Naive thymus-derived CD4-positive, alpha-beta T cell (primary cell): ENCODE measurements at regions of chr19 and their contacts with region 1.

Region 1: GRCh38 chr19:8513687-8514504 is at the start of gene ZNF414:
- DNase-seq: peak; percentile 93 to 100 (median 98)
- ATAC-seq: peak; percentile 88
- H3K4me3 ChIP-seq: peak within 1 kb of the TSS; percentile 73
- H3K4me3 Mint-ChIP-seq: peak within 1 kb of the TSS; percentile 89 to 97 (median 92)
- H3K27ac ChIP-seq: peak within 1 kb of the TSS; percentile 98
- H3K27ac Mint-ChIP-seq: peak within 1 kb of the TSS; percentile 91 to 100 (median 99)
- H3K4me1 ChIP-seq: peaks cover 52 to 63% of the 10 kb centered on the region in 2 donors
- H3K4me1 Mint-ChIP-seq: peaks cover 32 to 64% (median 47%) of the 10 kb centered on the region in 7 donors
- H3K27me3 ChIP-seq: no peaks in the 10 kb centered on the region
- H3K27me3 Mint-ChIP-seq: no peaks in the 10 kb centered on the region
- total RNA-seq, gene ZNF414: 36.0 to 69.2 (median 60.8) TPM

Region 2: DNA sequence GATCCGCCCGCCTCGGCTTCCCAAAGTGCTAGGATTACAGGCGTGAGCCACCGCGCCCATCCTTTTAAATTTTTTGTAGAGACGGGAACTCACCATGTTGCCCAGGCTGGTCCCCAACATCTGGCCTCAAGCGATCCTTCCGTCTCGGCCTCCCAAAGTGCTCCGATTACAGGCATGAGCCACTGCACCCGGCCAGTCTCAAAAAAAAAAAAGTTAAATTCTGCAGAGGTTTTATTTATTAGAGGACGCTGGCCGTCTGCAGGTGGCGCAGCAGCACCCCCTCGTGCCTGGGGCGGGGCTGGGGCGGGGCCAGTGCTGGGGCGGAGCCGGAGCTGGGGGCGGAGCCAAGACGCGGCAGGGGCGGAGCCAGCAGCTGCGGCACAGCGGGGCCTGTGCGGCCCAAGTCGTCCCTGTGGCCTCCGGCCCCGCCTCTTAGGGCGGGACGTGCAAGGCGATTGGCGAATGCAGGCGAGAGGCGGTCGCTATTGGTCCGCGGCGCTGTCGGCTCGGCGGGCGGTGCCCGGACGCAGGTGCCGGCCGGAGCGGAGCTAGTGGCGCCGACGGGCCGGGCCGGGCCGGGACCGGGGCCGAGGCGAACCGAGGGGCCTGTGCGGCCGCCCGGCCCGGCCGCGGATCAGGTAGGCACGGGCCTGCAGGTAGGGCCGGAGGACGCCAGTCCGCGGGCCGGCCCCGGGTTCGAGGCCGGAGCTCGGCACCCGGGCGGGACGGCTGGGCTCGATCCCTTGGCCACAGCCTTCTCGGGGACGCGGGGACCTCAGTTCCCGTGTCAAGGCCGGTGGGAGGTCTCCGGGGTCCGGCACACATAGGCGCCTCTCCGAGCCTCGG is 100.9 kb before region 1 on chr19 and contains the start of gene MARCHF2:
- CTCF ChIA-PET with region 1: interaction called, 4 read pairs
- POLR2A ChIA-PET with region 1: interaction called, 4 read pairs
- intact Hi-C with region 1: loop called in 1 of 2 experiments (anchors 1 kb)
- DNase-seq: peak; percentile 91 to 96 (median 93)
- ATAC-seq: peak; percentile 100
- H3K4me3 ChIP-seq: peak within 1 kb of the TSS; percentile 72
- H3K4me3 Mint-ChIP-seq: peak within 1 kb of the TSS; percentile 58 to 85 (median 71)
- H3K27ac ChIP-seq: peak within 1 kb of the TSS; percentile 76
- H3K27ac Mint-ChIP-seq: peak within 1 kb of the TSS in 6 of 9 donors; percentile 11 to 84 (median 34)
- H3K4me1 ChIP-seq: peaks cover 0 to 6% of the 10 kb centered on the region in 2 donors
- H3K4me1 Mint-ChIP-seq: peaks cover 0 to 15% (median 13%) of the 10 kb centered on the region in 7 donors
- H3K27me3 ChIP-seq: no peaks in the 10 kb centered on the region
- H3K27me3 Mint-ChIP-seq: no peaks in the 10 kb centered on the region
- total RNA-seq, gene MARCHF2: 18.0 to 42.1 (median 23.4) TPM

Region 3: DNA sequence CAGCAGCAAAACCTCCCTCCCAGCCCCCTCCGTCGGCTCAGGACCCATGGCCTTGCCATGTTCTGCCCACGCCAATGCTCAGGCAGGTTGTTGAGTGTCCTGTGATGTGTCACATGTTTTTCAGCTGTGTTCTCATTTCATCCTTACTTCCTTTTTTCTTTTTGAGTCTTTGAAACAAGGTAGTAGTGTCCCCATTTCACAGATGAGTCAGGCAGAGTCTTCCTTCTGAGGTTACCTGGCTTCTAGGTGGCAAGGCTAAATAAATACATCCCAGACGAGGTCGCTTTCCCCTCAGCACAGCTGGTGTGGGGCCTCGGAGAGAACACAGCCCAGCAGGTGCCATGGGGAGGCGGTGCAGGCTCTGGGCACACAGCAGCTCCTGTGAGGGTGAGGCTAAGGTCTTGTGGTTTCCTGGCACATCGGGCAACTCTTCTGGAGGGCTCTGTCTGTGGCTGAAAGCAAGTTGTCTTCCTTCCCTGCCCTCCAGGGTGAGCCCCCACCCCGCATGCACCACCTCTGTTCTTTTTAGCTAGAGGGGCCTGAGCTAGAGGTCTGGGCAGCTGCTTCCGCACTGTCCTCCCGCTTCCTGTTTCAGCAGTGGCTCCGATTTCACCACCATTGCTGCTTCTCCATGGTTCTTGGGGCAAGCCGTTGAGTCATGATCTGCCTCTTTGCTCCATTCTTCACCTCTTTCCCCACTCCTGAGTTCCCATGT is 26.6 kb before region 1 on chr19:
- CTCF ChIA-PET with region 1: interaction called, 12 read pairs
- POLR2A ChIA-PET with region 1: interaction called, 32 read pairs
- intact Hi-C with region 1: loop called in 1 of 2 experiments (anchors 1 kb)
- DNase-seq: peak; percentile 38 to 73 (median 59)
- ATAC-seq: peak; percentile 79
- H3K4me3 ChIP-seq: no peak overlapping the region
- H3K4me3 Mint-ChIP-seq: peak overlapping the region; percentile 33 to 85 (median 68)
- H3K27ac ChIP-seq: peak overlapping the region; percentile 48
- H3K27ac Mint-ChIP-seq: peak overlapping the region; percentile 82 to 95 (median 90)
- H3K4me1 ChIP-seq: peaks cover 15 to 26% of the 10 kb centered on the region in 2 donors
- H3K4me1 Mint-ChIP-seq: peaks cover 29 to 47% (median 34%) of the 10 kb centered on the region in 7 donors
- H3K27me3 ChIP-seq: no peaks in the 10 kb centered on the region
- H3K27me3 Mint-ChIP-seq: no peaks in the 10 kb centered on the region

Region 4: DNA sequence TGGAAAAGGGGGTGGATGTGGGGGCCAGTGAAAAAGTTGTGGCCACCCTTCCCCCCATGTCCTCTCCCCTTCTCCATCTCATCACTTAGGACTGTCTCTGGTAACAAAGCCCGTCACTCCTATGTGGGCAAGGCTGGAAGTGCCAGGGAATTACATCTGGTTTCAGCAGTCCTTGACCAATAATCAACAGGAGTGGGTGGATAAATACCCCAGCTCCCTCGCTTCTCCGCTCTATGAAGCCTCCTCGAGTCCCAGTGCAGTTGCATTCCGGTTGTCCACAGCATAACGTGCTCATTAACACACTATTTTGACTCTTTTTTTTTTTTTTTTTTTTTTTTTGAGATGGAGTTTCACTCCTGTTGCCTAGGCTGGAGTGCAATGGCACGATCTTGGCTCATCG is 31.8 kb after region 1 on chr19:
- CTCF ChIA-PET with region 1: no interaction called
- POLR2A ChIA-PET with region 1: interaction called, 10 read pairs
- intact Hi-C with region 1: no loop called
- DNase-seq: no peak
- ATAC-seq: no peak
- H3K4me3 ChIP-seq: no peak overlapping the region
- H3K4me3 Mint-ChIP-seq: no peak overlapping the region
- H3K27ac ChIP-seq: no peak overlapping the region
- H3K27ac Mint-ChIP-seq: no peak overlapping the region
- H3K4me1 ChIP-seq: no peaks in the 10 kb centered on the region
- H3K4me1 Mint-ChIP-seq: peaks cover 0 to 5% (median 0%) of the 10 kb centered on the region in 7 donors
- H3K27me3 ChIP-seq: no peaks in the 10 kb centered on the region
- H3K27me3 Mint-ChIP-seq: no peaks in the 10 kb centered on the region

Region 5: GRCh38 chr19:8580710-8581281 is 66.9 kb after region 1 on chr19:
- CTCF ChIA-PET with region 1: interaction called, 147 read pairs
- POLR2A ChIA-PET with region 1: interaction called, 566 read pairs
- intact Hi-C with region 1: loop called (anchors 1 to 2 kb)
- DNase-seq: peak; percentile 73 to 94 (median 83)
- ATAC-seq: peak; percentile 91
- H3K4me3 ChIP-seq: no peak overlapping the region
- H3K4me3 Mint-ChIP-seq: peak overlapping the region in 2 of 10 donors; percentile 23 to 25
- H3K27ac ChIP-seq: no peak overlapping the region
- H3K27ac Mint-ChIP-seq: peak overlapping the region in 2 of 9 donors; percentile 38
- H3K4me1 ChIP-seq: peaks cover 29 to 45% of the 10 kb centered on the region in 2 donors
- H3K4me1 Mint-ChIP-seq: peaks cover 19 to 42% (median 32%) of the 10 kb centered on the region in 7 donors
- H3K27me3 ChIP-seq: no peaks in the 10 kb centered on the region
- H3K27me3 Mint-ChIP-seq: peaks cover 0 to 3% (median 0%) of the 10 kb centered on the region in 5 donors